ENCODE measurements at regions of chr15 and their contacts with region 1.

Region 1: GRCh38 chr15:47663101-47663500 is 54.2 kb upstream of the SEMA6D start:
- DNase-seq: no peak
- H3K4me3 ChIP-seq: no peak overlapping the region
- H3K27ac ChIP-seq: no peak overlapping the region
- H3K4me1 ChIP-seq: no peaks in the 10 kb centered on the region
- H3K27me3 ChIP-seq: no peaks in the 10 kb centered on the region
- CTCF ChIP-seq: no peak
- EP300 ChIP-seq: no peak
- POLR2A ChIP-seq: no peak

Region 2: DNA sequence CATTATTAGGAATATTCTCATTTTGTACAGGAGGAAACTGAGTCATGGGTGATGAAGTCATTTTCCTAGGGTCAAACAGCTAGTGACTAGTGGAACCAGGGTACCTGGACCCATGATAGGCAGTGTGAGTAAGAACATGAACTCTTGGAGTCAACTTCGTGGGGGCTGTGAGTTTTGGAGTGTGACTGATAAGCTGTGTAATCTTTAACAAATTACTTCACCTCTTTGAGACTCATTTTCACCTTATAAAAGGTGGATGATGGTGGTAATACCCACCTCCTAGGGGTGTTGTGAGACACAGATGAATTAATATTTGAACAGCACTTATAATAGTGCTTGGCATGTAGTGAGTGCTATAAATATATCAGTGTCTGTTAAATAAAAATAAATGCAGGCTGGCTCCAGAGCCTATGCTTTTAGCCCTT is 63.3 kb after region 1 on chr15:
- intact Hi-C with region 1: no loop called
- DNase-seq: no peak
- H3K4me3 ChIP-seq: no peak overlapping the region
- H3K27ac ChIP-seq: no peak overlapping the region
- H3K4me1 ChIP-seq: peaks cover 0 to 38% (median 14%) of the 10 kb centered on the region in 4 donors
- H3K27me3 ChIP-seq: no peaks in the 10 kb centered on the region
- CTCF ChIP-seq: no peak
- EP300 ChIP-seq: no peak
- POLR2A ChIP-seq: no peak

Region 3: DNA sequence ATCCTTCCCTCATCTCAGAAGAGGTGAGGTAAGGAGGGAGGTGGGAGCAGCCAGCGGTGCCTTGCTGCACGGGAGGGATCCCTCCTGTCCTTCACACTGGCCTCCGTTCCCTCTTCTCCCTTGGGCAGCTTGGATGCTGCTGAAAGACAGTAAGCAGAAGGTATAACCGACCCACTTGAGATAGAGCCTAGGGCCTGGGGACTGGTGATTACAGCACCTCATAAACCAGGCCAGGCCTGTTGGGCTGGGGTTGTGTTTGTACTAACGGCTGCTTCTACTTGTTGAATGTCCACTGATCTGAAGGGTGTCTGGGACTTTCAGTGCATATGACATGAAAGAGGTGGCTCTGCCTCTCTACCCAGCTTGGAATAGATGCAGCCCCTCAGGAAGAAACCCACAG is 79.2 kb after region 1 on chr15:
- intact Hi-C with region 1: loop called (anchors 10 kb)
- DNase-seq: no peak
- H3K4me3 ChIP-seq: no peak overlapping the region
- H3K27ac ChIP-seq: no peak overlapping the region
- H3K4me1 ChIP-seq: no peaks in the 10 kb centered on the region
- H3K27me3 ChIP-seq: no peaks in the 10 kb centered on the region
- CTCF ChIP-seq: no peak
- EP300 ChIP-seq: no peak
- POLR2A ChIP-seq: no peak

Region 4: DNA sequence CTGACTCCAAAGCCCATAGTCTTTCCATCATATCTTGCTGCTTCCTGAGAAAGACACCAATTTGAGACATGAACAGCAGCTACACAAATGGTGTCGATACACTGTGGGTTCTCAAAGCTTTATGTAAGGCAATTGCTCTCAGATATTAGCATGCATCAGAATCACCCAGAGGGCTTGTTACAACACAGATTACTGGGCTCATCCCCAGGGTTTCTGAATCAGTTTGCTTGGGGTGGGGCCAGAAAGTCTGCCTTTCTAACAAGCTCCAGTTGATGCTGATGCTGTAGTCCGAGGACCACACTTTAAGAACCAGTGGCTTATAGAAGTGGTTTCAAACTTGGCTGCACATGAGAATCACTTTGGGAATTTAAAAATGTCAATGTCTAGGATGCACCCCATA is 140.7 kb after region 1 on chr15:
- intact Hi-C with region 1: no loop called
- DNase-seq: no peak
- H3K4me3 ChIP-seq: no peak overlapping the region
- H3K27ac ChIP-seq: no peak overlapping the region
- H3K4me1 ChIP-seq: no peaks in the 10 kb centered on the region
- H3K27me3 ChIP-seq: no peaks in the 10 kb centered on the region
- CTCF ChIP-seq: no peak
- EP300 ChIP-seq: no peak
- POLR2A ChIP-seq: no peak